ENCODE measurements at regions of chr19 and their contacts with region 1.

Region 1: GRCh38 chr19:19488875-19489690 is 26.3 kb downstream of the TSSK6 start:
- DNase-seq: peak; percentile 84
- ATAC-seq: peak; percentile 63
- H3K4me3 ChIP-seq: peak overlapping the region; percentile 17
- H3K27ac ChIP-seq: peak overlapping the region; percentile 89
- H3K4me1 ChIP-seq: peaks cover 40% of the 10 kb centered on the region
- H3K27me3 ChIP-seq: no peaks in the 10 kb centered on the region
- CTCF ChIP-seq: no peak

Region 2: DNA sequence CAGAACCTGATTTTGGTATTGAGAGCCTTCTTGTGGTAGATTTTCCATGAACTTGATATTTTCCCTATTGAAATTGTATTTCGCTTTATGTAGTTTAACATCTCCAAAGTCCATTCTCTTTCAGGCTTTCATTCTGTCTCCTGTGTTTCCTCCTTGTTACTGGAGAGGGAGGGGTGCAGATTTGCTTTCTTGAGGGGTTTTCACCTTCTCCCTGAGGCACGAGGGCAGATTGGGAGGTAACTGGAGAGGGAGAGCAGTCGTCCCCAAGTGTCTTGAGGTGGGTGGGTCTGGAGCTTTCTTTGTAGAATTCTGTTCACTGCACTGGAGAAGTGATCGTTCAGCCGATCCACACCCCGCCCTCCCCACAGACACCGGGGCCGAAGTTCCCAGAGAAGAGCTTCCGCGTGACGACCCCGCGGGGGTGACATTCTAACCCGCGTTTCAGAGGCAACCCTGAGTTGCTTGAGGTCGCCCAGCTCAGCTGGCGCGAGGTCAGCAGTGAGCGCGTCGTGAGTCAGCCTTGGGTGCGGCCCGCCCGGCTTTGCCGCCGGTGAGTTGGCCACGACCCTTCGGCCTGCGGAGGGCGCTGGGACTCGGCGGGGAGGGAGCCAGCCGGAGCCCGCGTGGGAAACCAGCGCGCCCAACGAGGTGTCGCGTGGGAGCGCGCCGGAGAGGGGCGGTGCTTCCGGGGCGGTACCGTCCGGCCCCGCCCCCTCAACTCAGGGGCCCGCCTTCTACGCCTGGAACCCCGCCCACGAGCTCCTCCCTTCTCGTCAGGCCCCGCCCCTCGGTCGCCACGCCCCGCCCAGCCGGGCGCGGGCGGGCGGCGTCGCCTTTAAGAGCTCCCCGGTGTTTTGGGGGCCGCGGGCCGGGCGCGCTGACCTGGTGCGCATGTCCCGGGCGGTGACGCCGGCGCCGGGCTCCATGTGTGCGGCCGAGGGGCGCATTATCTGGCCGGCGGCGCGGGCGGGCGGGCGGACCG is 83.9 kb before region 1 on chr19 and contains the start of gene GATAD2A:
- intact Hi-C with region 1: loop called (anchors 10 kb)
- DNase-seq: peak; percentile 96
- ATAC-seq: peak; percentile 97
- H3K4me3 ChIP-seq: peak within 1 kb of the TSS; percentile 80
- H3K27ac ChIP-seq: peak within 1 kb of the TSS; percentile 91
- H3K4me1 ChIP-seq: peaks cover 47% of the 10 kb centered on the region
- H3K27me3 ChIP-seq: no peaks in the 10 kb centered on the region
- CTCF ChIP-seq: peak; percentile 46
- total RNA-seq, gene GATAD2A: 85.8 TPM

Measured in upper lobe of right lung (tissue), 1 donor.